Transverse colon (tissue), 4 donors: ENCODE measurements at regions of chr7 and their contacts with region 1.

Region 1: GRCh38 chr7:152709287-152710152 is 33.6 kb upstream of the XRCC2 start:
- DNase-seq: no peak
- H3K4me3 ChIP-seq: no peak overlapping the region
- H3K27ac ChIP-seq: no peak overlapping the region
- H3K4me1 ChIP-seq: peaks cover 0 to 5% (median 0%) of the 10 kb centered on the region in 4 donors
- H3K27me3 ChIP-seq: no peaks in the 10 kb centered on the region
- CTCF ChIP-seq: no peak
- EP300 ChIP-seq: no peak
- POLR2A ChIP-seq: no peak

Region 2: DNA sequence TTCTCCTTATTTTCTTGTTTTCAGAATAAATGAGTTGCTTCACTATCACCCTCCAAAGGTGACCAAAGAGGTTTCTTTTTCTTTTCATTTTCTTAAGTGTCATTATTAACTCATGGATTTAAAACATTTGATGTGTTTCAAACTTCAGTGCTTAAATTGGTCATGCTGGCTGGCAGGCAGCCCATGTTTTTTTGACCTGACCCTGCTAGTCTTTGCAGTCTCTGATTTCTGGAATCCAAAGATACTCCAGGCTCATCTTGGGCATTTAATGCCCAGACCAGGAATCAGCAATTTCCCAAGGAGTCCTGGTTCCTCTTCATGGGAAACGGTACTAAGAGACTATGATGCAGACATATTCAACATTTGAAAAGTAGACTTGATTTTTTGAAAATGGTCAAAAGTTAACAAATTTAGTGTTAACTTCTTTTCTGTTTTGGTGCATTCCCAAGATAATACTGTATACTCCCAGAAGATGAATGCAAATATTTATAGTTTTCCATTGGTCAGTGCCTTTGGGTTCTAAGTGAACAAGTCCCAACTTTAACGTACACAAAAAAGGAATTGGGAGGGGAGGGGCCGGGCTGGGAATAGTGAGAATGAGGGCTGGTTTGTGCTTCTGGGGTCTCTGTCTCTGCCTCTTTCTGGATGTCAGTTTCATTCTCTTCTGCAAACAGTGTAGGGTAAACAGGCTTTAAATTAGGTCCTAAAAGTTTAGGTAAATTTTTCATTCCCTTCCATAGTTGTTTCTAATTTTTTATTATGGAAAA is 1348.1 kb before region 1 on chr7:
- in situ Hi-C with region 1: no loop called
- intact Hi-C with region 1: loop called (anchors 5 kb)
- DNase-seq: no peak
- H3K4me3 ChIP-seq: no peak overlapping the region
- H3K27ac ChIP-seq: no peak overlapping the region
- H3K4me1 ChIP-seq: peaks cover 0 to 3% (median 0%) of the 10 kb centered on the region in 4 donors
- H3K27me3 ChIP-seq: no peaks in the 10 kb centered on the region
- CTCF ChIP-seq: no peak
- EP300 ChIP-seq: no peak
- POLR2A ChIP-seq: no peak

Region 3: GRCh38 chr7:152336754-152337368 is 372.7 kb before region 1 on chr7:
- in situ Hi-C with region 1: loop called in 2 of 4 experiments (anchors 10 to 25 kb)
- intact Hi-C with region 1: no loop called
- DNase-seq: peak; percentile 10
- H3K4me3 ChIP-seq: no peak overlapping the region
- H3K27ac ChIP-seq: peak overlapping the region in 1 of 4 donors; percentile 7
- H3K4me1 ChIP-seq: peaks cover 6 to 48% (median 22%) of the 10 kb centered on the region in 4 donors
- H3K27me3 ChIP-seq: no peaks in the 10 kb centered on the region
- CTCF ChIP-seq: peak; percentile 42 to 63 (median 55)
- EP300 ChIP-seq: no peak
- POLR2A ChIP-seq: no peak

Region 4: DNA sequence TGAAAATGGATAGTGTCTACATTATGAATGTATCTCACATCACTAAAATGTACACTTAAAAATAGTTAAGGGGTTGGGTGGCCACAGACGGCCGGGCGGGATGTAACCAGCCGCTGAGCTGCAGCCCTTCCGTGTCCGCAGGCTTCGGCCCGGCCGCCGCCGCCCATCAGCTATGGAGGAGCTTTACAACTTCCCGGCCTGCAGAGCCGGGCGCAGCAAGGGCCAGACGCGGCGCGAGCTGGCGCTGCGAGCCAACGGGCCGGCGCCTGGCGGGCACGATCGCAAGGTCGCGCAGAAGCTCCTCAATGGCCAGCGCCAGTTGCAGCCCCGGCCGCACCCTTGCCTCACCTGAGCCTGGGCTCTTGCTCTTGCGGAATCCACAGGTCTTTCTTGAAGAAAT is 342.9 kb before region 1 on chr7:
- in situ Hi-C with region 1: no loop called
- intact Hi-C with region 1: no loop called
- DNase-seq: peak; percentile 46
- H3K4me3 ChIP-seq: no peak overlapping the region
- H3K27ac ChIP-seq: no peak overlapping the region
- H3K4me1 ChIP-seq: peaks cover 0 to 50% (median 8%) of the 10 kb centered on the region in 4 donors
- H3K27me3 ChIP-seq: no peaks in the 10 kb centered on the region
- CTCF ChIP-seq: peak in 1 of 5 experiments; percentile 11
- EP300 ChIP-seq: no peak
- POLR2A ChIP-seq: no peak